A549 (cell line): ENCODE measurements at regions of chr16 and their contacts with region 1.

Region 1: GRCh38 chr16:69796351-69797118 is 34.4 kb downstream of the WWP2 start:
- DNase-seq: peak; percentile 61 to 80
- ATAC-seq: peak; percentile 94
- H3K4me3 ChIP-seq: no peak overlapping the region
- H3K27ac ChIP-seq: peak overlapping the region in 1 of 2 experiments; percentile 16; a peak in 2 of 6 replicates
- H3K4me1 ChIP-seq: no peaks in the 10 kb centered on the region
- CTCF ChIP-seq: peak; percentile 95
- EP300 ChIP-seq: no peak
- POLR2A ChIP-seq: no peak
- RAD21 ChIP-seq: peak; percentile 93 to 97

Region 2: GRCh38 chr16:69520800-69521602 is 275.5 kb before region 1 on chr16:
- CTCF ChIA-PET with region 1: no interaction called
- POLR2A ChIA-PET with region 1: no interaction called
- DNase-seq: no peak
- ATAC-seq: peak; percentile 40 to 48; a peak in 4 of 6 replicates
- H3K4me3 ChIP-seq: no peak overlapping the region
- H3K27ac ChIP-seq: peak overlapping the region; percentile 54 to 73; a peak in 5 of 6 replicates
- H3K4me1 ChIP-seq: peaks cover 9% of the 10 kb centered on the region; the same call in 2 of the 3 replicates
- CTCF ChIP-seq: no peak
- EP300 ChIP-seq: no peak
- POLR2A ChIP-seq: no peak
- RAD21 ChIP-seq: no peak

Region 3: GRCh38 chr16:69812688-69813014 is 16.1 kb after region 1 on chr16:
- CTCF ChIA-PET with region 1: interaction called, 26 read pairs
- POLR2A ChIA-PET with region 1: no interaction called
- DNase-seq: peak; percentile 36 to 37
- ATAC-seq: peak; percentile 74 to 81
- H3K4me3 ChIP-seq: no peak overlapping the region
- H3K27ac ChIP-seq: peak overlapping the region; percentile 71 to 83
- H3K4me1 ChIP-seq: peaks cover 36% of the 10 kb centered on the region
- CTCF ChIP-seq: no peak
- EP300 ChIP-seq: no peak
- POLR2A ChIP-seq: no peak
- RAD21 ChIP-seq: no peak

Region 4: GRCh38 chr16:69839798-69840409 is 43.4 kb after region 1 on chr16:
- CTCF ChIA-PET with region 1: interaction called, 15 read pairs
- POLR2A ChIA-PET with region 1: no interaction called
- DNase-seq: no peak
- ATAC-seq: no peak
- H3K4me3 ChIP-seq: no peak overlapping the region
- H3K27ac ChIP-seq: no peak overlapping the region
- H3K4me1 ChIP-seq: no peaks in the 10 kb centered on the region
- CTCF ChIP-seq: no peak
- EP300 ChIP-seq: no peak
- POLR2A ChIP-seq: no peak
- RAD21 ChIP-seq: no peak

Region 5: GRCh38 chr16:69859105-69859989 is 62.8 kb after region 1 on chr16:
- CTCF ChIA-PET with region 1: interaction called, 21 read pairs
- POLR2A ChIA-PET with region 1: no interaction called
- DNase-seq: peak; percentile 54 to 57
- ATAC-seq: peak; percentile 83 to 91; a peak in 5 of 6 replicates
- H3K4me3 ChIP-seq: no peak overlapping the region
- H3K27ac ChIP-seq: peak overlapping the region; percentile 29 to 67; a peak in 4 of 6 replicates
- H3K4me1 ChIP-seq: peaks cover 12% of the 10 kb centered on the region
- CTCF ChIP-seq: peak; percentile 64
- EP300 ChIP-seq: no peak
- POLR2A ChIP-seq: no peak
- RAD21 ChIP-seq: peak; percentile 63 to 69

Region 6: GRCh38 chr16:69930117-69930776 is 133.7 kb after region 1 on chr16:
- CTCF ChIA-PET with region 1: interaction called, 288 read pairs
- POLR2A ChIA-PET with region 1: no interaction called
- DNase-seq: peak; percentile 59 to 82
- ATAC-seq: peak; percentile 81 to 96
- H3K4me3 ChIP-seq: no peak overlapping the region
- H3K27ac ChIP-seq: 0 out of 6 replicates have a peak overlapping the region, but pooled peaks of 1 of the 2 experiments have one; percentile 42
- H3K4me1 ChIP-seq: no peaks in the 10 kb centered on the region
- CTCF ChIP-seq: peak; percentile 85
- EP300 ChIP-seq: no peak
- POLR2A ChIP-seq: no peak
- RAD21 ChIP-seq: peak; percentile 82 to 85